CD8-positive, alpha-beta T cell (primary cell): ENCODE measurements at regions of chr10 and their contacts with region 1.

Region 1: GRCh38 chr10:104925232-104925851 is 284.3 kb downstream of the SORCS3 start:
- DNase-seq: peak in 4 of 9 experiments; percentile 13 to 45 (median 22)
- ATAC-seq: no peak
- H3K4me3 ChIP-seq: no peak overlapping the region
- H3K4me3 Mint-ChIP-seq: no peak overlapping the region
- H3K27ac ChIP-seq: no peak overlapping the region
- H3K27ac Mint-ChIP-seq: no peak overlapping the region
- H3K4me1 ChIP-seq: no peaks in the 10 kb centered on the region
- H3K4me1 Mint-ChIP-seq: no peaks in the 10 kb centered on the region
- H3K27me3 ChIP-seq: no peaks in the 10 kb centered on the region
- H3K27me3 Mint-ChIP-seq: no peaks in the 10 kb centered on the region
- CTCF ChIP-seq: no peak

Region 2: DNA sequence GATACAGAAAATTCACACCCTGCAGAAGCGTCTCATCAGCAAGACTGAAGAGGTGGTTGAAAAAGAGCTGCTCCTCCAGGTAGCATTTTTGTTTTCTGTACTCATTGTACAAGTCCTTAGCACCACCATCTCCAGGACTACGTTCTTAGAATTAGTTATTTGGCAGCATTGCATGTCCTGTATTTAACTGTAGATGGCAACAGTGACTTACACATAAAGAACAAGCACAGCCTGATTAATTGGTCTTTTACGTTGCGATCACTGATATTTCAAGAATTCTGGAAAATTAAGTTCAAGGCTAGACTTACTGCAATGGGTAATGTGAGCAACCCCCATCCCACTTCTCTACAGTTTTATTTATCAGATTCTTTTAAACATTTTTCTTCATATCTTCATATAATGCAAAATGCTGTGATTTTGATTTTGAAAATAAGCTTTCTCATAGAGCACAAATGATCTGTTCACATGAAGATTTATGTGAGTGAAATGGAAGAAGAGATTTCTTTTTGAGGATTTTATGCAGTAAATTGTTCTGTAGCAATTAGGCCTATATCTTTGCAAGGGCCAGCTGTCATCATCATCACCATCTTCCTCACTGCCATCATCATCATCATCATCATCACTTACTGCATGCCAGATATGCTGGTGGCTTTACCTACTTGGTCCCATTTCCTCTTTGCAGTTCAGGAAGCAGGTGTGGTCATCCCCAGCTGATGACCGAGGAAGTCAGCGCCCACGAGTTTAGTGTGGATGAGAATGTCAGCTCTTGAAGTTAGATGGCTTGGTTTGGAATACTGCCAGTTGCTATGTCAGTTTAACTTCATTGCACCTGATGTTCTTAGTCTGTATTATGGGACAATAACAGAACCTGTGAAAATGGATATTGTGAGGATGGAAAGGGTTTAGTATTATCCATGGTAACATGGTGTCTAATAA is 518.4 kb before region 1 on chr10:
- CTCF ChIA-PET with region 1: interaction called, 3 read pairs
- POLR2A ChIA-PET with region 1: no interaction called
- intact Hi-C with region 1: loop called in 1 of 2 experiments (anchors 5 kb)
- DNase-seq: peak in 2 of 9 experiments; percentile 15 to 37
- ATAC-seq: no peak
- H3K4me3 ChIP-seq: no peak overlapping the region
- H3K4me3 Mint-ChIP-seq: no peak overlapping the region
- H3K27ac ChIP-seq: no peak overlapping the region
- H3K27ac Mint-ChIP-seq: no peak overlapping the region
- H3K4me1 ChIP-seq: no peaks in the 10 kb centered on the region
- H3K4me1 Mint-ChIP-seq: peaks cover 5% of the 10 kb centered on the region
- H3K27me3 ChIP-seq: peaks cover 0 to 3% of the 10 kb centered on the region in 2 experiments
- H3K27me3 Mint-ChIP-seq: peaks cover 17% of the 10 kb centered on the region
- CTCF ChIP-seq: no peak